ENCODE measurements at regions of chr6 and their contacts with region 1.

Region 1: DNA sequence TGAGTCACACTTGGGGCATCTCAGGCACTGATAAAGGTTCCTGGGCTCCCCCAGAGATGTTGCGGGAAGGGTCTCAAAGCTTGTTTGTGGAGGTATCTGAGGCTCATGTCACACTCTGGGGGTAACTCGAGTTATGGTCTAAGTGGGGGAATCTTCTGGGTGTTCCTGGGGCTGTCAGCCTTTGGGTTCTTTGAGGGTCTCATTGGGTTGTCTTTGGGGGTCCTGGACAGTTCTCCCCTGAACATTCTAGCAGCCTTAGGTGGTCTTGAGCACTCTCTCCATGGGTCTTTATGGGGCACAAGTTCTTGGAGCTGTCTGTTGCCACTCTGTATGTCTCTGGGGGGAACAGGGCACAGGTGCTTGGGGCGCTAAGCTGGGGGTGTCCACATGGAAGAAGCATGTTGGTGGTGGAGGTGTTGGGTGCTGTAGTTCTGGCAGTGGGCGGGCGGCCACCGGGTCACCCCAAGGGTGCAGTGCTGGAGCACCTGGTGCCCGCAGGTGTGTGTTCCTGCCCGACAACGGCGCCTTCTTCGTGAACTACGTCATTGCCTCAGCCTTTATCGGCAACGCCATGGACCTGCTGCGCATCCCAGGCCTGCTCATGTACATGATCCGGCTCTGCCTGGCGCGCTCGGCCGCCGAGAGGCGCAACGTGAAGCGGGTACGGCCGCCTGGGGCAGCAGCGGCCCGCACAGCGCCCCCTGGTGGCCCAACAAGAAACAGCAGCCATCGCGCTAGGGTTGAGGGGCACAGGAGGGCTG is 7.1 kb upstream of the CAPN11 start:
- DNase-seq: peak; percentile 83
- H3K4me3 ChIP-seq: no peak overlapping the region
- H3K27ac ChIP-seq: no peak overlapping the region
- H3K4me1 ChIP-seq: peaks cover 3% of the 10 kb centered on the region
- H3K27me3 ChIP-seq: no peaks in the 10 kb centered on the region
- CTCF ChIP-seq: peak; percentile 98 to 100 (median 99)
- POLR2A ChIP-seq: no peak

Region 2: GRCh38 chr6:44094403-44095242 is 56.9 kb before region 1 on chr6:
- intact Hi-C with region 1: loop called (anchors 5 kb)
- DNase-seq: no peak
- H3K4me3 ChIP-seq: no peak overlapping the region
- H3K27ac ChIP-seq: no peak overlapping the region
- H3K4me1 ChIP-seq: no peaks in the 10 kb centered on the region
- H3K27me3 ChIP-seq: no peaks in the 10 kb centered on the region
- CTCF ChIP-seq: no peak
- POLR2A ChIP-seq: no peak